Activated T-helper 1 cell treated with anti-CD3 and anti-CD28 coated beads, Interleukin-12 subunit alpha, Interleukin-12 subunit beta, Interleukin-2, Interleukin-4 antibody, amounts not matched to agents 30 ng/mL and 10 ng/mL and 1 ng/mL, durations not matched to agents 14 hours and 24 hours and 36 hours (primary cell): ENCODE measurements at regions of chr14 and their contacts with region 1.

Region 1: DNA sequence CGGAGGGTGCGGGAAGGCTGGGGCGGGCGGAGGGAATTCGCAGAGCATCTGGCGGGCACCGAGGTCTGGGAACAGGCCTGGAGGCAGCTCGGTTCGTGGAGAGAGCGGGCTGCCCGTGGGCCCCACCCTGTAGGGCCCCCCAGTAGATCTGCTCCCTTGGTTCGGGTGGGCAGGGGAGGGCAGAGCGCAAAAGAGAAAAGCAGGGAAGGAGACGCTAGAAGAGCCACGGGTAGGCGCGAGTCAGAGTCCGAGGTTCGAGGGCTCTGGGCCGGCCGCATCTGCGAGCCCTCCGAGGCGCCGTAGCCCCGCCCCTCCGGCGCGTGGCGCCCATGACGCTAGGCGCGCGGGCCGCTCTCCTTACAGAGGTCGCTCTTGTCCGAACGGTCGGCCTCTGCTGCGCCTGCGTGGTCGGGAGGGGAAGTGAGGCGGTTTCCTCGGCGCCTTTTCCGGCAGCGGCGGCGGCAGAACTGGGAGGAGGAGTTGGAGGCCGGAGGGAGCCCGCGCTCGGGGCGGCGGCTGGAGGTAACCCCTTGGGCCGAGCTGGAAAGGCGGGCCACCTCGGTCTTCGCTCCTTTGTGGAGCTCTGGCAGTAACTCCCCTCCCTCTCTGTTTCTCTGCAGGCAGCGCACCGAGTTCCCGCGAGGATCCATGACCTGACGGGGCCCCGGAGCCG is at the start of gene ARF6:
- DNase-seq: peak; percentile 97
- H3K4me3 Mint-ChIP-seq: peak within 1 kb of the TSS; percentile 99
- H3K27ac Mint-ChIP-seq: peak within 1 kb of the TSS; percentile 100
- H3K4me1 Mint-ChIP-seq: peaks cover 19% of the 10 kb centered on the region
- H3K27me3 Mint-ChIP-seq: peaks cover 2% of the 10 kb centered on the region
- total RNA-seq, gene ARF6: 163 and 164 TPM in 2 replicates

Region 2: DNA sequence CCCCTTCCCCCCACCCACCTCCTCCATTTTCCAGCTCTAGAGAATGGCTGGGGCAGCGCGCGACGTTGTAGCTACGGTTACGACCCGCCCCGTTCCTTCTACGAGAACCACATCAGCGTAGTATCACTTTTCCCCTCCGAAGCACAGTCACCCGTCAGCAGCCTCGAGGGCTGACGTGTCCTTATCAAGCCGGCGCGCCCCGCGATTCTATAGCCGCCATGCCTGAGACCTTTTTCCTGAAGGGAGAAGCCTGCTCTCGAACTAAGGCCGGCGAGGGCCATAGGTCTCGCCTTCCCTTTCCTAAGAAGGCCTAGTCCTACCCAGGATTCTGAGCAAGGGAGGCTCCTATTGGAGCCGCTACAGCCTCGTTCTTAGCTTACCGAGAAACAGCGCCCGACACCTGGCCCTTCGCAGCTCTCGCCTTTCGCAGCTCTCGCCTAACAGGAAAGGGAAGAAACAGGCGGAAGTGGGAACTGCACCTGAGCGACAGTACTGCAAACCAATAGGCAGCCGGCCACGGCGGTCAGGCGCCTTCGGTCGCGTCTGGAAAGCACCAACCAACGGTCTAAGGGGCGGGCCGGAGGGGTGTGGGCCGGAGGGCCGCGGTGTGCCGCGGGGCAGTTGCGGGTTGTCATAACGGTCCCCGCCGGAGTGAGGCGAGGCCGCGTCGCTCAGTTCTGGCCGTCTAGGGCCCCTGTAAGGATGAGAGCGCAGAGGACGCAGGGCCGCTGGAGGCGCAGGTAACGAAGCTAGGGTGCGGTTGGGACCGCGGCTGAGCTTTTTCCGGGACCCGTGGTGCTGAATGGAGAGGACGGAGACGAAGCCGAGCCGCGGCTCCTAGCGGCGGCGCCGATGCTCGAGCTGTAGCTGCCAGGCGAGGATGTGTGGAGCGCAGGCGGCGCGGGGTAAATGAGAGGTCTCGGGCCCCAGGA is 272.3 kb before region 1 on chr14 and contains the starts of genes MGAT2 and RPL36AL:
- intact Hi-C with region 1: loop called (anchors 2 kb)
- DNase-seq: peak; percentile 96
- H3K4me3 Mint-ChIP-seq: peak within 1 kb of the TSS; percentile 98
- H3K27ac Mint-ChIP-seq: peak within 1 kb of the TSS; percentile 98
- H3K4me1 Mint-ChIP-seq: peaks cover 53% of the 10 kb centered on the region
- H3K27me3 Mint-ChIP-seq: peaks cover 2% of the 10 kb centered on the region
- total RNA-seq, gene MGAT2: 57.5 and 58.3 TPM in 2 replicates
- total RNA-seq, gene RPL36AL: 224 and 237 TPM in 2 replicates

Region 3: DNA sequence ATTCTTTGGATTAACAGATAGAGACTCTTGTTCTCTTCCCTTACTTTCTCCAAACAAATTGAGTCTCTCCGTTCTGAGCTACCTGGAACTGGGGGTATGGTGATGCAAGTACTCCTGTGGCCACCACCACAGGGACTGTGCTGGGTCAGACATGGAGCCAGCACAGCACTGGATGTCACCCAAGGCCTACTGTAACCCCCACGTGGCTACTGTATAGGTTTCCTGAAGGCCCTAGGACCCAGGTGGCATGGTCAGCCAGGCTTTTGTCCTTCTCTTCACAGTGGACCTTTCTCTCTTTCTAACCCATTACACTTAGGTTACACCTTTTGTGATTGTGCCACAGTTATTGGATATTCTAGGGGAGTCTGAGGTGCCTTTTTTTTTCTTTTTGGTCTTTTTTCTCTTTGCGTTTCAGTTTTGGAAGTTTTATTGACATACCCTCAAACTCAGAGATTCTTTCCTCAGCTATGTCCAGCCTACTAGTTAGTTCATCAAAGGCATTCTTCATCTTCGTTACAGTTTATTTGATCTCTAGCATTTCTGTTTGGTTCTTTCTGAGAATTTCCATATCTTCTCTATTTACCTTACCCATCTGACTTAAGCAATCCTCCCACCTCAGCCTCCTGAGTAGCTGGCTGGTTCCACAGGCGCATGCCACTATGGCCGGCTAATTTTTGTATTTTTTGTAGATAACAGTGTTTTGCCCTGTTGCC is 130.8 kb before region 1 on chr14:
- intact Hi-C with region 1: no loop called
- DNase-seq: no peak
- H3K4me3 Mint-ChIP-seq: no peak overlapping the region
- H3K27ac Mint-ChIP-seq: no peak overlapping the region
- H3K4me1 Mint-ChIP-seq: peaks cover 4% of the 10 kb centered on the region
- H3K27me3 Mint-ChIP-seq: peaks cover 7% of the 10 kb centered on the region

Region 4: GRCh38 chr14:49808780-49809179 is 84.0 kb before region 1 on chr14:
- intact Hi-C with region 1: no loop called
- DNase-seq: no peak
- H3K4me3 Mint-ChIP-seq: no peak overlapping the region
- H3K27ac Mint-ChIP-seq: no peak overlapping the region
- H3K4me1 Mint-ChIP-seq: no peaks in the 10 kb centered on the region
- H3K27me3 Mint-ChIP-seq: no peaks in the 10 kb centered on the region

Region 5: GRCh38 chr14:49862089-49862673 is 30.6 kb before region 1 on chr14:
- intact Hi-C with region 1: loop called (anchors 1 kb)
- DNase-seq: peak; percentile 81
- H3K4me3 Mint-ChIP-seq: no peak overlapping the region
- H3K27ac Mint-ChIP-seq: no peak overlapping the region
- H3K4me1 Mint-ChIP-seq: peaks cover 10% of the 10 kb centered on the region
- H3K27me3 Mint-ChIP-seq: peaks cover 6% of the 10 kb centered on the region

Region 6: DNA sequence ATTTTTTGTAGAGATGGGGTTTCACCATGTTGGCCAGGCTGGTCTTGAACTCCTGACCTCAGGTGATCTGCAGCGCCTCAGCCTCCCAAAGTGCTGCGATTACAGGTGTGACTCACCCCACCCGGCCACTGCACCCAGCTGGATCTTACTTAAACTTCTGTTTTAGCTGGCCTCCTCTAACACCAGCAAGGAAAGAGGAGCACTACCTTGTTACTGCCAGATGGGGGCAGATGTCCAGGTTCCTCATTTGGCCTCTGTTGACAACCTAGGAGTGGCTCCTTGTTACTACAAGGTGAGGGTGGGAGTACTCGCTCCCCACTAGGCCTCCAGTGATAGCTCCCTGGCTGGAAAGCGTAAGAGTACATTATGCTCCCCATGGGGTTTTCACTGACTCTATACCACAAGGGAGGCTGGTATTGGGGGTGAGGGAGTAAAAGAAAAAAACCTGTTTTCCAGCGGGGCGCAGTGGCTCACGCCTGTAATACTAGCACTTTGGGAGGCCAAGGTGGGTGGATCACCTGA is 13.0 kb before region 1 on chr14:
- intact Hi-C with region 1: loop called (anchors 1 kb)
- DNase-seq: peak; percentile 45
- H3K4me3 Mint-ChIP-seq: no peak overlapping the region
- H3K27ac Mint-ChIP-seq: peak overlapping the region; percentile 61
- H3K4me1 Mint-ChIP-seq: peaks cover 34% of the 10 kb centered on the region
- H3K27me3 Mint-ChIP-seq: peaks cover 3% of the 10 kb centered on the region

Region 7: GRCh38 chr14:49984424-49984823 is 91.7 kb after region 1 on chr14:
- intact Hi-C with region 1: loop called (anchors 1 kb)
- DNase-seq: no peak
- H3K4me3 Mint-ChIP-seq: no peak overlapping the region
- H3K27ac Mint-ChIP-seq: peak overlapping the region; percentile 93
- H3K4me1 Mint-ChIP-seq: peaks cover 66% of the 10 kb centered on the region
- H3K27me3 Mint-ChIP-seq: no peaks in the 10 kb centered on the region

Region 8: DNA sequence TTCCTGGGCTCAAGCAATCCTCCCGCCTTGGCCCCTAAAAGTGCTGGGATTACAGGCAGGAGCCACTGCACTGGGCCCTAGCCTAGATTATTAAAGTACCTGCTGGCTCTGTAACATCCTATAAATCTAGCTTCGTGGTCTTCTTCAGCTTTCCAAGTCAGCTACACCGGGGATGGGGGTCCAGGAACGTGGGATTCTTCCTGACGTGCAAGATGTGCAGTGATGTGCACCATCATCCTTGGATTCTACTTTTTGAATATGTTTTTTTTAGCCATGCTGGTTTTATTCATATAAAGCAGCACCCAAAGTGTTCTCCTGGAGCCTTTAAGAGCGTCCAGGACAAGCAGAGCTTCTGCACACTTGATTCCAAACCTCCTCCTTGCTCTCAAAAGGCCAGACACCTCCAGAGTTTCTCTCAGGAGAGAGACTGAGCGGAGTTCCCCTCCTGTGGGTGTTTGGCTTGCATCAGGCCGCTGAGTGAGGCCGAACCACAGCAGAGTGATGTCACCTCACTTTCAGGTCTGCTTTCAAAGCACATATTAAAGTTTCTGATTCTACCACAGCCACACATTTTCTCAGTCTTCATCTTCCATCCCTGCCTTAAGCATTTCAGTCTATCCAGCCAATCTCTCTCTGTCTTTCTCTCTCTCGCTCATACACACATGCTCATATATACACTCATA is 190.2 kb after region 1 on chr14:
- intact Hi-C with region 1: loop called (anchors 2 kb)
- DNase-seq: peak; percentile 84
- H3K4me3 Mint-ChIP-seq: peak overlapping the region; percentile 16
- H3K27ac Mint-ChIP-seq: peak overlapping the region; percentile 90
- H3K4me1 Mint-ChIP-seq: peaks cover 70% of the 10 kb centered on the region
- H3K27me3 Mint-ChIP-seq: no peaks in the 10 kb centered on the region